Activated naive CD4-positive, alpha-beta T cell treated with anti-CD3 and anti-CD28 coated beads for 36 hours (primary cell): ENCODE measurements at regions of chr16 and their contacts with region 1.

Region 1: DNA sequence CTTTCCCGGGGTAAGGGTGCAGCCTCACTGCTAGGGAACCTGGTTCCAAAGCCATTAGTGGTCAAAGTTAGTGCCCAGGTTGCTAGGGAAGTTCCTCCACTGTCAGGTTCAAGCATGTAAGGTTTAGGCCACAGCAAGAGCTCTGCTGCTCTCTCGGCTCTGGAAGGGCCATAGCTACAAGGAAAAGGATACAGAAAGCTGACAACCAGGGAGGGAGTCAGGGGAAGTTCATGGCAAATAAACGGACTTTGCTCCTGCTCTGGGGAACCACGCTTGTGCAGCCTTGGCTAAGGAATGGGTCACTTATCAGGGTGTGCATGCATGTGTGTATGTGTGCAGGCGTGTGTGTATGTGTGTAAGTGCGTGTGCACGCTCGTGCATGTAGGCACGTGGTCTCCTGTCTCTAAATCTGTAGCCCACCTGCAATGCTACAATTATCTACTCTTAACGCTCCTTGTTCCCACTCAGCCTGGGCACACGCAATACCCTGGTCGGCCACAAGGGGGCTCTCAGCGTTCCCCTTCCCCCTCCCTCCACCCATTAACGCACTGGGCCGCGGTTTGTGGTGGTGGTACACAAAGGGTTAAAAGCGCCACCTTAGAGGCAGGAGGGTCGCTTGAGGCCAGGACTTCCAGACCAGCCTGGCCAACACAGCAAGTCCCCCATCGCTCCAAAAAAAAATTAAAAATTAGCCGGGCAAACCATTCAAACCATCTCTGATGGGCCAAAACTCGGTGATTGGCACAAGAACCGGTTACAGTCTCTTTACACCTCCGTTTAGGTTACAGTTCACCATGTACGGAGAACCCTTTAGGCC is 48.4 kb upstream of the KDM8 start:
- DNase-seq: peak; percentile 83
- H3K4me3 Mint-ChIP-seq: no peak overlapping the region
- H3K27ac Mint-ChIP-seq: no peak overlapping the region
- H3K4me1 Mint-ChIP-seq: peaks cover 14% of the 10 kb centered on the region
- H3K27me3 Mint-ChIP-seq: no peaks in the 10 kb centered on the region

Region 2: DNA sequence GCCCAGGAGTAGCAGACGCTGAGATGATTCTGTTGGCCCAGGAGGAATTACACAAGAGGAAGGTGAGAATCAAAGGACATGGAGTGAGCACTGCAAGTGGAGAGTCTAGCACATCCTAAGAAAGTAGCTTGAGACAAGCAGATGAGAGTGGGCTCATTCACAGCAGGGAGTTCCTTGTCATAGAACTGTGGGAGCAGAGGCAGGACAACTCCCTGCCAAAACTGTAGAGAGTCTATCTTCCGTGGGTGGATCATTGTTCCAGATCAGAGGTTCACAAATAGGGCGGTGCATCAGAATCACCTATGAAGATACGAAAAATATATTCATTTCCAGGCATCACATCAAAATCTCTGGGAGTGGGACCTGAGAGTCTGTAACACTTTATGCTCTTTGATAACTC is 377.1 kb before region 1 on chr16:
- CTCF ChIA-PET with region 1: no interaction called
- intact Hi-C with region 1: no loop called
- DNase-seq: no peak
- H3K4me3 Mint-ChIP-seq: no peak overlapping the region
- H3K27ac Mint-ChIP-seq: no peak overlapping the region
- H3K4me1 Mint-ChIP-seq: peaks cover 2% of the 10 kb centered on the region
- H3K27me3 Mint-ChIP-seq: peaks cover 29% of the 10 kb centered on the region

Region 3: GRCh38 chr16:27138266-27138665 is 16.6 kb before region 1 on chr16:
- CTCF ChIA-PET with region 1: no interaction called
- intact Hi-C with region 1: no loop called
- DNase-seq: no peak
- H3K4me3 Mint-ChIP-seq: no peak overlapping the region
- H3K27ac Mint-ChIP-seq: no peak overlapping the region
- H3K4me1 Mint-ChIP-seq: no peaks in the 10 kb centered on the region
- H3K27me3 Mint-ChIP-seq: no peaks in the 10 kb centered on the region

Region 4: GRCh38 chr16:27169511-27170071 is 14.7 kb after region 1 on chr16:
- CTCF ChIA-PET with region 1: interaction called, 43 read pairs
- intact Hi-C with region 1: loop called (anchors 1 kb)
- DNase-seq: peak; percentile 92
- H3K4me3 Mint-ChIP-seq: no peak overlapping the region
- H3K27ac Mint-ChIP-seq: peak overlapping the region; percentile 87
- H3K4me1 Mint-ChIP-seq: peaks cover 55% of the 10 kb centered on the region
- H3K27me3 Mint-ChIP-seq: no peaks in the 10 kb centered on the region

Region 5: GRCh38 chr16:27461483-27462171 is 306.7 kb after region 1 on chr16:
- CTCF ChIA-PET with region 1: interaction called, 3 read pairs
- intact Hi-C with region 1: loop called (anchors 1 kb)
- DNase-seq: no peak
- H3K4me3 Mint-ChIP-seq: no peak overlapping the region
- H3K27ac Mint-ChIP-seq: no peak overlapping the region
- H3K4me1 Mint-ChIP-seq: peaks cover 30% of the 10 kb centered on the region
- H3K27me3 Mint-ChIP-seq: no peaks in the 10 kb centered on the region